ENCODE measurements at regions of chr9 and their contacts with region 1.

Region 1: GRCh38 chr9:109012876-109013678 is at the start of gene CTNNAL1:
- DNase-seq: peak; percentile 96
- ATAC-seq: peak; percentile 97
- total RNA-seq, gene CTNNAL1: 77.5 TPM

Region 2: GRCh38 chr9:108823829-108824228 is 189.2 kb before region 1 on chr9:
- intact Hi-C with region 1: no loop called
- DNase-seq: no peak
- ATAC-seq: no peak

Region 3: GRCh38 chr9:108933718-108934322 is 79.3 kb before region 1 on chr9 and contains the start of gene ELP1:
- intact Hi-C with region 1: loop called (anchors 10 kb)
- DNase-seq: peak; percentile 95
- ATAC-seq: peak; percentile 95
- total RNA-seq, gene ELP1: 20.1 TPM

Measured in Right ventricle myocardium superior (tissue), 1 donor.